Heart right ventricle (tissue), 16 donors: ENCODE measurements at regions of chr18 and their contacts with region 1.

Region 1: DNA sequence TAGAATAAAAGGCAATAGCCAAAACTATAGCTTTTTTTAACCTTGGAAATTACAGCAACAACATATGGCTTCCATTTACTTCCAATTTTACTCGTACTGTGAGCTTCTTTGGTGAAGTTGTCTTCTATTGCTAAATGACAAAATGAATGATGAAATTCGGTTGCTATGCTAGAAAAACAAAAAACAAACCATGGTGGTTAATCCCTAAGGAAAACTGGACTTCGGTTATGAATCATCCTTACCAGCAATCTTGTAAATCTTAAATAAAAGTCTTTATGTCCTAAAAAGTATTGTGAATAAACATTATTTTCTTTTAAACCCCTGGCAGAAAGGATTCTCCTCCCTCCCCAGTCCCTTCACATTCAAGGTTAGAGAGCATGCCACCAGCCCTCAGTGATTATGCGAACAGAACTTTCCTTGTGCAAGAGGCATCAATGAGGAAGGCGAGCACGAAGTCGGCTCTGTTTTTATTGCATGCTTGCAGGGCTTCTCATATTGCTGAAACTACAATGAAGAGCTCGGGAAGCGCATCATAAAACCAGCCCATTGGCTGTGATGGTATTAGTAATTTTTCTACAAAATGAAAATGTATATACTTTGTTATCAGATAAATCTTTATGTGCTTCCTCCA is 62.9 kb downstream of the ZNF521 start:
- DNase-seq: peak in 1 of 2 donors; percentile 7
- ATAC-seq: peak in 1 of 8 donors; percentile 30
- H3K4me3 ChIP-seq: no peak overlapping the region
- H3K27ac ChIP-seq: peak overlapping the region in 7 of 10 donors; percentile 26 to 64 (median 41)
- H3K4me1 ChIP-seq: peaks cover 0 to 50% (median 34%) of the 10 kb centered on the region in 9 donors
- H3K27me3 ChIP-seq: no peaks in the 10 kb centered on the region
- CTCF ChIP-seq: no peak

Region 2: GRCh38 chr18:25164848-25165811 is 124.0 kb before region 1 on chr18:
- intact Hi-C with region 1: loop called in 3 of 10 experiments (anchors 10 kb)
- DNase-seq: no peak
- ATAC-seq: peak; percentile 52 to 84 (median 79)
- H3K4me3 ChIP-seq: peak overlapping the region in 9 of 10 donors; percentile 19 to 55 (median 48)
- H3K27ac ChIP-seq: peak overlapping the region in 7 of 10 donors; percentile 28 to 58 (median 42)
- H3K4me1 ChIP-seq: peaks cover 5 to 28% (median 19%) of the 10 kb centered on the region in 9 donors
- H3K27me3 ChIP-seq: no peaks in the 10 kb centered on the region
- CTCF ChIP-seq: peak in 1 of 9 donors; percentile 19

Region 3: GRCh38 chr18:25230658-25231326 is 58.3 kb before region 1 on chr18:
- intact Hi-C with region 1: loop called in 3 of 10 experiments (anchors 5 to 10 kb)
- DNase-seq: peak; percentile 61 to 81
- ATAC-seq: peak; percentile 84 to 91 (median 87)
- H3K4me3 ChIP-seq: peak overlapping the region in 1 of 10 donors; percentile 17
- H3K27ac ChIP-seq: peak overlapping the region; percentile 24 to 81 (median 72)
- H3K4me1 ChIP-seq: peaks cover 2 to 77% (median 64%) of the 10 kb centered on the region in 9 donors
- H3K27me3 ChIP-seq: no peaks in the 10 kb centered on the region
- CTCF ChIP-seq: no peak

Region 4: DNA sequence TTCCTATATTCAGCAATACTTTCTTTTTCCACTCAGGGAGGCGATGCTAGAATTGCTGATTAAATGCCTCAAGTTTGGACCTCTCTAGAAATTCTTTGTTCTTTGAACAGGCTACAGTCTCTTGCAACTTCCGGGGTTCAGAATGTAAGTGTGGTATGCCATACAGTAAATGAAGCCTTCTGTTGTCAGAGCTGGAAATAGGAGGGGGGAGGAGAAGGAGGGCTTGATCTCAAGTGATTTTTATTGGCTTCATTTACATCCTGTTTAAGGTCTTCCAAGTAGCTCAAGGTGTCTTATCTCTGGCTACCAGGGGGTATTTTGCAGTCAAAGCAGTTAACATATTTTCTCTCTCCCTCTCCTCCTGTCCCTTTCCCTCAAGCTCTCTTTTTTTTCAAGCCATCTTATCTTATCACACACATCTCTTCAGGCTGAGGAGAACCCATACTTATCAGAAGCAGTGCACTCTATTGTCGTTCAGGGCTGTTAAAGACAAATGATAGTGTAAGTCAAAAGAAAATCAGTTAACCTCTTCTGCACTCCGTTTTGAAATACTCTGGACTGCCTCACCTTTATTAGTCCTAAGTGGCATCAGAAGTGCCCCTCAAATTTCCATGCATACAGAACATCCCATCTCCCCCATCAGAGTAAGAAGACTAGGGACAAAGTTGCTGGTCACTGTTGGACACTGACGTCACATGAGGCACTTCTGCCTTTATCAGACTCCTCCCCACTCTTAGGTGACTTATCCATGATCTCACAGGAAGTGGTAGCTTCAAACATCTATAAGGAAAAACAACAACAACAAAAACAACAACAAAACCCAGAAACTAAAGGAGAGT is 49.3 kb before region 1 on chr18:
- intact Hi-C with region 1: loop called in 3 of 10 experiments (anchors 5 to 10 kb)
- DNase-seq: no peak
- ATAC-seq: peak in 4 of 8 donors; percentile 18 to 51 (median 27)
- H3K4me3 ChIP-seq: no peak overlapping the region
- H3K27ac ChIP-seq: peak overlapping the region in 3 of 10 donors; percentile 0 to 45 (median 22)
- H3K4me1 ChIP-seq: peaks cover 0 to 61% (median 31%) of the 10 kb centered on the region in 9 donors
- H3K27me3 ChIP-seq: no peaks in the 10 kb centered on the region
- CTCF ChIP-seq: no peak

Region 5: GRCh38 chr18:25326361-25326952 is 37.3 kb after region 1 on chr18:
- intact Hi-C with region 1: loop called in 1 of 10 experiments (anchors 5 kb)
- DNase-seq: no peak
- ATAC-seq: peak in 7 of 8 donors; percentile 32 to 80 (median 52)
- H3K4me3 ChIP-seq: no peak overlapping the region
- H3K27ac ChIP-seq: peak overlapping the region in 3 of 10 donors; percentile 9 to 42 (median 37)
- H3K4me1 ChIP-seq: peaks cover 3 to 47% (median 40%) of the 10 kb centered on the region in 9 donors
- H3K27me3 ChIP-seq: no peaks in the 10 kb centered on the region
- CTCF ChIP-seq: no peak

Region 6: DNA sequence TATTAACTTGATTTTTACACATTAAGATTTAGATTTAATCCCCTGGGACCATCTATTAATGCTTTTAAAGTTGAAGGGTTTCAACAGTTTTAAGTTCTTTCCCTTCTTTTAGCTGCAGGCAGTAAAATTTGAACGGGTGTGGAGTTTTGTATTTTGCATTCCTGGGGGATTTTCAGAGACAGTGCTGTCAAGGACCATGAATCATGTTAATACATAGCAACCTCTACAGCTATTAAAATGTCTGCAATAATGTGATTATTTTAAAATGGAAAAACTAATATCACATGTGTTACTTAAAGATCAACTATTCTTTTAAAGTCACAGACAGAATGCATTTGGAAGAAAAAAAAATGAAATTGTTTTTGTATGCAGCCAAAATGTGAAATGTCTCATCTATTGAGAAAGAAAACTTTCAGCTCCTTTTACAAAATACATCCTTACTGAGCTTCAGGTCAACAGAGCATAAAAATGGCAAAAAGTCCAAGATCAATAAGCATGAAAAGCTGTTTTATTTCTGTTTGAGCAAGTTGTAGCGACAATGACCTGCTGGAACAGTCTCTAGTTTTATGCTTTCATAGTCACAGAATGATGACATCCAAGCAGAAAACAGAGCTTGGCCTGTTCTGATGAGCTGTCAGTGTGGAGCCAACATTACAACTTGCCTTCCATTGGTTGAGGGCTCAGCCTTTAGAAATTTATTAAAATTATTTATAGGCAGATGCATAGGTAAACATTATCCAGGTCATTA is 84.5 kb after region 1 on chr18:
- intact Hi-C with region 1: no loop called
- DNase-seq: no peak
- ATAC-seq: no peak
- H3K4me3 ChIP-seq: no peak overlapping the region
- H3K27ac ChIP-seq: no peak overlapping the region
- H3K4me1 ChIP-seq: no peaks in the 10 kb centered on the region
- H3K27me3 ChIP-seq: peaks cover 0 to 5% (median 0%) of the 10 kb centered on the region in 7 donors
- CTCF ChIP-seq: no peak